IMR-90 (cell line): ENCODE measurements at regions of chr4 and their contacts with region 1.

Region 1: GRCh38 chr4:74376888-74377483 is 12.0 kb downstream of the EREG start:
- DNase-seq: peak; percentile 77
- ATAC-seq: peak; percentile 90
- H3K4me3 ChIP-seq: no peak overlapping the region
- H3K27ac ChIP-seq: no peak overlapping the region
- H3K4me1 ChIP-seq: no peaks in the 10 kb centered on the region
- H3K27me3 ChIP-seq: no peaks in the 10 kb centered on the region
- CTCF ChIP-seq: peak; percentile 81
- POLR2A ChIP-seq: no peak
- RAD21 ChIP-seq: peak; percentile 90

Region 2: DNA sequence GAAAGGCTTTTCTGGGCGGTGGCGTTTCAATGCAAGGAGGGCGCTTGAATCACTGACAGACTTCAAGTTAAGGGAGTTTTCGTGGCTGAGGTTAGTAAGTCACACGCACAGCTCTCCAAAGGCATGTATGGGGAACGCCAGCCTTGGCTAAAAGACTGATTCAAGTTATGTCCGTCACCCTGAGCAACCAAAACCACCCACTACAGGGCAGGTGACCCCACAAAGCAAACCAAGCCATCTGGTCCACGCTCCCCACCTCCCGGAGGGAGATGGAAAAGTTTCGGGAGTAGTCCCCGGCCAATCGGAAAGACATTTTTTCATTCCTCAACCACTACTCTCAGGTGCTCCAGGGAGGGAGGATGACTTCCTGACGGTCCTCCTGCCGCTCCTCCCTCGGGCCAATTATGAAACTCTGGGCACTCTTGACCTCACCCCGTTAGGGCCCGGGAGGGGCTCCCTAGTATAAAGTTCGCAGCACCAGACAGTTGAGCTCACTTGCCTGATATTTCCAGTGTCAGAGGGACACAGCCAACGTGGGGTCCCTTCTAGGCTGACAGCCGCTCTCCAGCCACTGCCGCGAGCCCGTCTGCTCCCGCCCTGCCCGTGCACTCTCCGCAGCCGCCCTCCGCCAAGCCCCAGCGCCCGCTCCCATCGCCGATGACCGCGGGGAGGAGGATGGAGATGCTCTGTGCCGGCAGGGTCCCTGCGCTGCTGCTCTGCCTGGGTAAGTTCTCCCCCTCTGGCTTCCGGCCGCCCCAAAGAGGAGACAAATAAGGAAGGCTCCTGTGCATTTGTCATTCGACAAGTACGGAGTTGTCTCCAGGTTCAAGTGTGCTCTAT is 12.1 kb before region 1 on chr4 and contains the start of gene EREG:
- CTCF ChIA-PET with region 1: no interaction called
- POLR2A ChIA-PET with region 1: no interaction called
- dilution Hi-C with region 1: no loop called
- in situ Hi-C with region 1: no loop called
- intact Hi-C with region 1: no loop called
- DNase-seq: peak; percentile 62
- ATAC-seq: peak; percentile 90
- H3K4me3 ChIP-seq: peak within 1 kb of the TSS; percentile 41
- H3K27ac ChIP-seq: no peak within 1 kb of the TSS; the same call in 1 of the 2 replicates
- H3K4me1 ChIP-seq: no peaks in the 10 kb centered on the region
- H3K27me3 ChIP-seq: no peaks in the 10 kb centered on the region; the same call in 1 of the 2 replicates
- CTCF ChIP-seq: no peak
- POLR2A ChIP-seq: no peak
- RAD21 ChIP-seq: no peak
- total RNA-seq, gene EREG: 0.36 and 1.1 TPM in 2 replicates

Region 3: GRCh38 chr4:74444891-74445642 is 68.1 kb after region 1 on chr4 and contains the start of gene AREG:
- CTCF ChIA-PET with region 1: interaction called, 10 read pairs
- POLR2A ChIA-PET with region 1: no interaction called
- dilution Hi-C with region 1: no loop called
- in situ Hi-C with region 1: no loop called
- intact Hi-C with region 1: loop called (anchors 2 kb)
- DNase-seq: peak; percentile 41
- ATAC-seq: peak; percentile 90
- H3K4me3 ChIP-seq: peak within 1 kb of the TSS; percentile 90
- H3K27ac ChIP-seq: peak within 1 kb of the TSS; percentile 64; the same call in 1 of the 2 replicates
- H3K4me1 ChIP-seq: 0 out of 2 replicates have a peak, but pooled peaks cover 2% of the 10 kb centered on the region
- H3K27me3 ChIP-seq: no peaks in the 10 kb centered on the region
- CTCF ChIP-seq: peak; percentile 57
- POLR2A ChIP-seq: no peak
- RAD21 ChIP-seq: peak; percentile 49
- total RNA-seq, gene AREG: 0.18 and 0.28 TPM in 2 replicates

Region 4: GRCh38 chr4:74531963-74532794 is 155.2 kb after region 1 on chr4:
- CTCF ChIA-PET with region 1: interaction called, 34 read pairs
- POLR2A ChIA-PET with region 1: no interaction called
- dilution Hi-C with region 1: no loop called
- in situ Hi-C with region 1: loop called (anchors 5 kb)
- intact Hi-C with region 1: loop called (anchors 1 kb)
- DNase-seq: peak; percentile 87
- ATAC-seq: peak; percentile 88
- H3K4me3 ChIP-seq: no peak overlapping the region
- H3K27ac ChIP-seq: no peak overlapping the region
- H3K4me1 ChIP-seq: peaks cover 4% of the 10 kb centered on the region; the same call in 1 of the 2 replicates
- H3K27me3 ChIP-seq: no peaks in the 10 kb centered on the region
- CTCF ChIP-seq: peak; percentile 78
- POLR2A ChIP-seq: no peak
- RAD21 ChIP-seq: peak; percentile 78

Region 5: GRCh38 chr4:74623041-74623440 is 246.1 kb after region 1 on chr4:
- CTCF ChIA-PET with region 1: interaction called, 6 read pairs
- POLR2A ChIA-PET with region 1: interaction called, 7 read pairs
- dilution Hi-C with region 1: no loop called
- in situ Hi-C with region 1: no loop called
- intact Hi-C with region 1: loop called (anchors 2 kb)
- DNase-seq: peak; percentile 24
- ATAC-seq: no peak
- H3K4me3 ChIP-seq: no peak overlapping the region
- H3K27ac ChIP-seq: no peak overlapping the region
- H3K4me1 ChIP-seq: peaks cover 15% of the 10 kb centered on the region
- H3K27me3 ChIP-seq: peaks cover 13% of the 10 kb centered on the region
- CTCF ChIP-seq: peak; percentile 34; the same call in 1 of the 2 replicates
- POLR2A ChIP-seq: no peak
- RAD21 ChIP-seq: peak; percentile 44

Region 6: DNA sequence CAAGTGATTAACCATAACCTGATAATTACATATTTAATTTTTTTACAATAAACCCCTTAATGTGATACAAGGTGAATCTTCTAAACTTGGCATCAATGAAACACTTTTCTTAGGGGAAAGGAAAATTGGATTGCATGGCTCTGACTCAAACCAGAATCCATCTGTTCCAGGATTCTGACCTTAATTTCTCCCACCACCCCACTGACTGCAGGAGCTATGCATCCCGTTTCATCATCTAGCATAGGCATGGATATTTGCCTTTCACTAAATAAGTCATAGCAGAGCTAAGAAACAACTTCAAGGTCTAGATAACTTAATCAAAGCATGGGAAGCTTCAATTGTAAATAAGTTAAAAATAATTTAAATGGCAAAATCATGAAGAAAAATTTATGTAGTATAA is 261.0 kb after region 1 on chr4:
- CTCF ChIA-PET with region 1: interaction called, 10 read pairs
- POLR2A ChIA-PET with region 1: no interaction called
- dilution Hi-C with region 1: no loop called
- in situ Hi-C with region 1: no loop called
- intact Hi-C with region 1: no loop called
- DNase-seq: peak; percentile 13
- ATAC-seq: no peak
- H3K4me3 ChIP-seq: no peak overlapping the region
- H3K27ac ChIP-seq: no peak overlapping the region
- H3K4me1 ChIP-seq: peaks cover 9% of the 10 kb centered on the region
- H3K27me3 ChIP-seq: no peaks in the 10 kb centered on the region; the same call in 1 of the 2 replicates
- CTCF ChIP-seq: no peak
- POLR2A ChIP-seq: no peak
- RAD21 ChIP-seq: no peak

Region 7: GRCh38 chr4:74790652-74791443 is 413.9 kb after region 1 on chr4:
- CTCF ChIA-PET with region 1: no interaction called
- POLR2A ChIA-PET with region 1: no interaction called
- dilution Hi-C with region 1: no loop called
- in situ Hi-C with region 1: no loop called
- intact Hi-C with region 1: no loop called
- DNase-seq: no peak
- ATAC-seq: no peak
- H3K4me3 ChIP-seq: no peak overlapping the region
- H3K27ac ChIP-seq: no peak overlapping the region
- H3K4me1 ChIP-seq: no peaks in the 10 kb centered on the region
- H3K27me3 ChIP-seq: peaks cover 31% of the 10 kb centered on the region
- CTCF ChIP-seq: no peak
- POLR2A ChIP-seq: no peak
- RAD21 ChIP-seq: no peak